AG04450 (cell line): ENCODE measurements at regions of chr7 and their contacts with region 1.

Region 1: DNA sequence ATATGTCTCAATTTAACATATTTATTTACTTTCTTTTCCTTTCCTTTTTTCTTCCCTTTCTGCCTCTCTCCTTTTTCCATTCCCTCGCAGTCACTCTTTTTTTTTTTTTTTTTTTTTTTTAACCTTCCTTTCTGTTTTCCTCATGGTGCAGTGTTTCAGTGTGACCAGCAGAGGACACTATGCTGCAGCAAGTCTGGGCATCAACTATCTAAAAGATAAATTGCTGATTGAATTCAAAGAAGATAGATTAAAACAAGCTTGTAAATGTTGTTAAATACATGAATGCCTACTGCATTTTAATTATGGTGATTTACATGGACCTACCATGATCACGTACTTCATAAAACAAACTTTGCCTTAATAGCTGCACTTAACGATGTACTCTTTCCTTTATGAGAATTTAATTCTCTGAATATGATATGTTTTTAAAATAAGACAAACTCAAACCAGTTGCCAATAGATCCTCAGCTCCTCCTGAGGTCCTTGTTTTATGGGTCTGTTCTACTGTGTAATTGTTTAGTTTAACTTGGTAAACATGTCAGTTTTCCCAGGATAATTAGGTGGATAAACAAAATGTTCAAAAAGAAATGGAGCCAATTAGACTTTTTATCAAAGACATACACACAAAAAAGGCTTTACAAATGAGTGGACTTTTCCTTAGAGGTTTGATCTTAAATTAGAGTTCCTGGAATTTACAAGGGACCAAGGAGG is 101.0 kb upstream of the AGR3 start:
- DNase-seq: no peak
- H3K4me3 ChIP-seq: no peak overlapping the region
- H3K27ac ChIP-seq: no peak overlapping the region
- H3K27me3 ChIP-seq: no peaks in the 10 kb centered on the region
- CTCF ChIP-seq: peak; percentile 98

Region 2: DNA sequence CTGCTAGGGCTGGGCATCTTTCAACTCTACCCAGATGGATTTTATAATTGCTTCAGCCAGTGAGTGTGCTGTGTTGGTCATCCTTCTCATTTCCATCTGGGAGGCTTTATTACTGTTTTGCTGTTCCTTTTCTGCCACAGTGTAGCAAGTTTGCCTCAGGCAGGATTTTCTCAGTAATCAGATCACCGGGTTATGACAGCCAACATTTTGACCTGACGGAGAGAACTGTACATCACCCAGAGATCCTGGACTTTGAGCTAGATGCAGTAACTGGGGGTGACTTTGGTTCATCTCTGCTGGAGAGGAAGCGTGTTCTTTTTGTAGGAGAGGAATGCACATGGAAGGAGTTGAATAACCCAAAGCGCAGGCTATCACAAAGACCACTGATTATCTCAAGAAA is 10.7 kb after region 1 on chr7:
- CTCF ChIA-PET with region 1: interaction called, 10 read pairs
- POLR2A ChIA-PET with region 1: no interaction called
- DNase-seq: no peak
- H3K4me3 ChIP-seq: no peak overlapping the region
- H3K27ac ChIP-seq: no peak overlapping the region
- H3K27me3 ChIP-seq: no peaks in the 10 kb centered on the region
- CTCF ChIP-seq: no peak

Region 3: GRCh38 chr7:17227766-17228490 is 245.1 kb after region 1 on chr7:
- CTCF ChIA-PET with region 1: interaction called, 11 read pairs
- POLR2A ChIA-PET with region 1: no interaction called
- DNase-seq: no peak
- H3K4me3 ChIP-seq: no peak overlapping the region
- H3K27ac ChIP-seq: no peak overlapping the region
- H3K27me3 ChIP-seq: no peaks in the 10 kb centered on the region
- CTCF ChIP-seq: no peak

Region 4: DNA sequence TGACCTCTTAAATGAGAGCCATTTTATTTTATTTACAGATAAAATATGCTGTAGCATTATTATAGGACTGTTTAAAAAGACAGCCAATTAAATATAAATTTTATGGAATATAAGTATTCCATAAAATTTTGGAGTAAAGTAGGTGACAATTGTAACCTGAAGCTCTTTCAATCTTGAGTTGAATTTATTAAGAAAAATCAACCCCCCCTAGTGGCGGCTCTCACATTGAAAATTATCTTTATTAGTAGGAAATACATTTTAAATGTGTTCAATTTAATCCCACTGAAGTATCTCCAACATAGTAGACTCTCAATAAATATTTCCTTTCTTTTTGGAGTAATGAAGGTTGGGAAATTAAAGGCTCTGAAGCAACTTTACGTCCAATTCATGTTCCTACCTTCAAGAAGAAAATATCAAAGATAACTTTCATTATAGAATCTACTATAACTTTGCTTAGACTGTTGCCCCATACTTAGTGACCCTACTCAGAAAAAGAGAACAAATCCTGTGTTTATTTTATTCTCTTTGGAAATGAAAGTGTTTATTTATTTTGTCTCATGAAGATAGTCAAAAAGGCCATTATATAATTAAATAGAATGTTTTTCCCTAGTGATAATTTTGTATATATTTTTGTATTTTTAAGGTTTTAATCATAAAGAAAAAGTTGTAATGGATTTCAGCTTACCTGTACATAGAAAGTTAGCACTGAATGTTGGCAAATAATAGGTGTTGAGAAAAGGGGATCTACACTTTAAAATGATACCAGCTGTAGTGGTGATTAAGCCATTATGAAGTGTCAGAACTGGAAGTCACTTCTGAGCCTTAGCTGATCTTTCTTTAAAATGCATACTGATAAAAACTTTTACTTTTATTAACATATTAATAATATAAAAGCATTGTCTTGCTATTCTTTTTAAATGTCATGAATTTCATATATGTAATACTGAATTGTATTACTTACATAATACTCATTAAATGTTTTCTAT is 319.0 kb after region 1 on chr7:
- CTCF ChIA-PET with region 1: interaction called, 45 read pairs
- POLR2A ChIA-PET with region 1: interaction called, 8 read pairs
- DNase-seq: no peak
- H3K4me3 ChIP-seq: peak overlapping the region; percentile 35; the same call in 1 of the 2 replicates
- H3K27ac ChIP-seq: no peak overlapping the region
- H3K27me3 ChIP-seq: no peaks in the 10 kb centered on the region
- CTCF ChIP-seq: peak; percentile 63

Region 5: DNA sequence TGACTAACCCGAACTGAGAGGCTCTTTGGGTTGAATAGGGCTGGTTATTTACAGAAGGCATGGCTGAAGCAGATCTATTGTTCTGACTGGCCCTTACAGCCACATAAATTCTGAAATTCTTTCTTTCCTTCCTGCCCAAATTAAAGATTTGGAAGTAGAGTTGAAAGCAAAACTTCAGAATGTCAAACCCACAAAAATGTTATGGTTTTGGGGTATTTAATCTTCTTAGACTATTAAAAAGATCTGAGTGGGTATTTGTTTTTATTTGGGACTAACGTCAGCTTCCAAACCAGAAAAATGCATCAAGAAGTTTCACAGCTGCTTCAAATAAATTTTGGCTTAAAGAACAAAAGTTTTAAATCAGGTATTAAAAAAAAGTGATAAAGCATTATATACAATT is 440.2 kb after region 1 on chr7:
- CTCF ChIA-PET with region 1: interaction called, 15 read pairs
- POLR2A ChIA-PET with region 1: no interaction called
- DNase-seq: no peak
- H3K4me3 ChIP-seq: no peak overlapping the region
- H3K27ac ChIP-seq: no peak overlapping the region
- H3K27me3 ChIP-seq: no peaks in the 10 kb centered on the region
- CTCF ChIP-seq: no peak